Activated T-helper 1 cell treated with anti-CD3 and anti-CD28 coated beads, Interleukin-12 subunit alpha, Interleukin-12 subunit beta, Interleukin-2, Interleukin-4 antibody, amounts not matched to agents 30 ng/mL and 10 ng/mL and 1 ng/mL, durations not matched to agents 14 hours and 24 hours and 36 hours (primary cell): ENCODE measurements at regions of chr1 and their contacts with region 1.

Region 1: DNA sequence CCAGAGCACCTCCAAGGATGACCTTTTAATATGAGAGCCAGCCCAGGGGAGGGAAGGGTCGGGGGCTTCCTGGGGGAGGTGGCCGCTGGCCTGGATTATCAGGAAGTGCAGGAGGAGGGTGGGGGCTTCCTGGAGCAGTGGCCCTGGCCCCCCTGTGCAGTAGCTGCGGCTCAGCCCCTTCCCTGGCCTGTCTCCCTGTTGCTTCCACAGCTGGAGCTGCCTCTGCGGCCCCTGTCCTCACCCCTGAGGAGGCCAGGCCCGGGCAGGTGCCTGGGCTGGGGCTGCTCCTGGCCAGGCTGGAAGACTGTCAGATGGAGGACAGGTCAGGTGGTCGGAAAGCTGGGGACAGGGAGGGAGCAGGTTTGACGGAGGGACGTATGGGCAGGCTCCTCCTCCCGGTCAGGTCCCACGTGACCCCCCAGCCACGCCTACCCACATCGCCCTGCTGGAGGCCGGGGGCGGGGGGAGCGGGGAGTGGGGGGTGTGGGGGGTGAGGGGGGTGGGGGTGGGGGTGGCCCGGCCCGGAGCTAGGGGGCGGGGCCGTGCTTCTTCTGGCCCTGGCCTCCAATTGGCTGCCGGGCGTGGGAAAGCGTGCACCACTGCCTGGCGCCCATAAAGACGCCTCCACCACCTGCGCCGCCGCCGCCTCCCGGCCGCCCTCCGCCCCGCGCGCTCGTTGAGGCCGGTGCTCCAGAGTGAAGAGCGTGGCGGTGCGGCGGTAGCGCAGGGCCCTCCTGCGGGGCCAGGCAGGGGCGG is 10.2 kb upstream of the TNFRSF14 start:
- DNase-seq: peak; percentile 87
- H3K4me3 Mint-ChIP-seq: peak overlapping the region; percentile 91
- H3K27ac Mint-ChIP-seq: peak overlapping the region; percentile 61
- H3K4me1 Mint-ChIP-seq: peaks cover 7% of the 10 kb centered on the region
- H3K27me3 Mint-ChIP-seq: peaks cover 13% of the 10 kb centered on the region

Region 2: DNA sequence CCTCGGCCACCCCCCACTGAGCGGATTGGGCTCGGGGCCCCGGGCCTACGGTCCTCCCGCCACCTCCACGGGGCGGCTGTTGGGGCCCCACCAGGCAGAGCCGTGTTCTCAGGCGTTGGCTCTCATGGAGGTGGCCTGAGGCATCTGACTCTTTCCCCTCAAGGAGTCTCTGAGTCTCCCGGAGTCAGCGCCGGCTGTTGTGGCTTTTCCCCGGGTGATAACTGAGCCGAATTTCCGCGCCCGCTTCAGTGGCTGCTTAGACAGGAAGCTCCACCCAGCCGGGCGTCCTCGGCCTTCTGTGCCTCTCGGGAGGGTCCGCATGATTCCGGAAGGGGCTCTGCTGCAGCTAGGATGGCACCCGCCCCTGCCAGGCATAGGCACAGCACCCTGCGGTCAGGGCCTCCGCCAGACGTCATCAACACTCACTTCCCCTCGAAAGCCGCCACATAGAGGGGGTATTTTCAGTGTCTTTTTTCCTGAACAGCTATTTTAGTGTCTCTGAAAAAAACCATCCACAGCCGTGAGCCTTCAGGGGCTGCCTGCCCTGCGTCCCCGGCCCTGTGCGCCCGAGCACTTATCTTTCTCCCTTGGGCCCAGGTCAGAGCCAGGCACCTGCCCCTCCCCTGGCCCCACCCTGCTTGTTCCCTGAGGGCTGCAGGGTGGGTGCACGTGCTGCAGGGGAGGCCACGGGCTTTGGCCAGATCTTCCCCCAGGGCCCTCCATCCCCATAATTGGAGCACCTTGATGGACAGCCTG is 244.9 kb before region 1 on chr1:
- intact Hi-C with region 1: loop called (anchors 5 kb)
- DNase-seq: peak; percentile 77
- H3K4me3 Mint-ChIP-seq: peak overlapping the region; percentile 77
- H3K27ac Mint-ChIP-seq: peak overlapping the region; percentile 91
- H3K4me1 Mint-ChIP-seq: peaks cover 35% of the 10 kb centered on the region
- H3K27me3 Mint-ChIP-seq: no peaks in the 10 kb centered on the region

Region 3: DNA sequence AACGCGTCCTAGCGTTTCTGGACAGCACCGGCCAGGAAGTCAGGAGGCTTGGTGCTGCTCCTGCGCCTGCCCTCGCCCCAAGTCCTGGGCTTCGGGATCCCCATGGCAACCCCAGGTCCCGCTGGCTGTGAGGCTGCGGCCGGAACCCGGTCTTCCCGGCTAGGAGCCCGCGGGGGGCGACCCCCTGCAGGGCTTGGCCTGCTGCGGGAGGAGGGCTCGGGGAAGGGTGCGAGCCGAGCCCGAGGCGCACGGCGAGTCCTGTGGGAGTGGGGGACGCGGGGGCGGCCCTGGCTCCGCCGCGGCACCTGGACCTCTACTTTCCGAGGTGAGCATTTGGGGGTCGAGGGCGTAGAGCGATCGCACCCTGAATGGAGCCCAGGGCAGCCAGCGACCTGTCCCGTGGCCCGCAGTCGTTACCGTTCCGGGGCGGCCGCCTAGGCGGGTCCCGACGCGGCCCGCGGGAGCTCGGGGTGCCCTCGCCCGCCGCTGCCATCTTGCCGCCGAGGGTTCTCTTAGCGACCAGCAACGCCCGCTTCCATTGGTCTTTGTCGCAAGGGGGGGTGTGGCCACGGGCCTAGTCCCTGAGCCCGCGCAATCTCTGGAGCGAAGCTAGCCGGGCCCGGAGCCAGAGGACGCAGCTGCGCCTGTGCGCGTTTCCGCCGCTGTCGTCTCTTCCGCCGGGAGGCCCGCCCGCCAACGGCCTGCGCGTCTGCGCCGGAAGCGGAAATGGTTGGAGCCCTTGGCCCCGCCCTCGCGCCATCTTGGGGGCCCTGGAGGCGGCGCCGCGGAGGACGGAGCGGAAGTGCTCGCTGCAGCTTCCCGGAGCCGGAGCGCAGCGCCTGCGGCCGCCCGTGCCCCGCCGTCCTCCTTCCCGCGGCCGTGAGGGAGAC is 154.7 kb before region 1 on chr1 and contains the starts of genes MORN1 and RER1:
- intact Hi-C with region 1: loop called (anchors 1 kb)
- DNase-seq: peak; percentile 99
- H3K4me3 Mint-ChIP-seq: peak within 1 kb of the TSS; percentile 88
- H3K27ac Mint-ChIP-seq: peak within 1 kb of the TSS; percentile 82
- H3K4me1 Mint-ChIP-seq: peaks cover 28% of the 10 kb centered on the region
- H3K27me3 Mint-ChIP-seq: no peaks in the 10 kb centered on the region
- total RNA-seq, gene MORN1: 8.4 and 8.6 TPM in 2 replicates
- total RNA-seq, gene RER1: 161 and 177 TPM in 2 replicates

Region 4: DNA sequence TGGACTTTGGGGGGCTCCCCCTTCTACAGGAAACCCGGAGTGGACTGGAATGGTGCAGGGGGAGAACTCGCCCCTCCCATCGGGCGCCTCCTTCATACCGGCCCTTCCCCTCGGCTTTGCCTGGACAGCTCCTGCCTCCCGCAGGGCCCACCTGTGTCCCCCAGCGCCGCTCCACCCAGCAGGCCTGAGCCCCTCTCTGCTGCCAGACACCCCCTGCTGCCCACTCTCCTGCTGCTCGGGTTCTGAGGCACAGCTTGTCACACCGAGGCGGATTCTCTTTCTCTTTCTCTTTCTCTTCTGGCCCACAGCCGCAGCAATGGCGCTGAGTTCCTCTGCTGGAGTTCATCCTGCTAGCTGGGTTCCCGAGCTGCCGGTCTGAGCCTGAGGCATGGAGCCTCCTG is 10.3 kb after region 1 on chr1 and contains the start of gene TNFRSF14:
- intact Hi-C with region 1: loop called (anchors 1 kb)
- DNase-seq: peak; percentile 73
- H3K4me3 Mint-ChIP-seq: peak within 1 kb of the TSS; percentile 88
- H3K27ac Mint-ChIP-seq: peak within 1 kb of the TSS; percentile 86
- H3K4me1 Mint-ChIP-seq: peaks cover 21% of the 10 kb centered on the region
- H3K27me3 Mint-ChIP-seq: no peaks in the 10 kb centered on the region
- total RNA-seq, gene TNFRSF14: 207 and 215 TPM in 2 replicates

Region 5: DNA sequence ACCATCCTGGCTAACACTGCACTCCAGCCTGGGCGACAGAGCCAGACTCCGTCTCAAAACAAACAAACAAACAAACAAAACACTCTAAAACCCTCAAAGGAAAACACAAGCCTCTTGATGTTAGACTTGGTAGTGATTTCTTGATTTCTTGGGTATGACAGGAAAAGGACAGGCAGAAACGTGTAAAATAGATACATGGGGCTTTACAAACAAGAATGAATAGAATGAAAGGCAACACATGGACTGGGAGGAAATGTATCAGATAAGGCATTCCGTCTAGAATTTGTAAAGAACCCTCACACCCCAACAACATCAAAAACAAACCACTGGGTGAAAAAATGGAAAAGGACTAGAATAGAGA is 32.8 kb after region 1 on chr1:
- intact Hi-C with region 1: loop called (anchors 1 kb)
- DNase-seq: no peak
- H3K4me3 Mint-ChIP-seq: peak overlapping the region; percentile 42
- H3K27ac Mint-ChIP-seq: peak overlapping the region; percentile 95
- H3K4me1 Mint-ChIP-seq: peaks cover 83% of the 10 kb centered on the region
- H3K27me3 Mint-ChIP-seq: no peaks in the 10 kb centered on the region

Region 6: GRCh38 chr1:2642560-2643413 is 96.8 kb after region 1 on chr1:
- intact Hi-C with region 1: loop called (anchors 1 kb)
- DNase-seq: peak; percentile 93
- H3K4me3 Mint-ChIP-seq: peak overlapping the region; percentile 85
- H3K27ac Mint-ChIP-seq: peak overlapping the region; percentile 93
- H3K4me1 Mint-ChIP-seq: no peaks in the 10 kb centered on the region
- H3K27me3 Mint-ChIP-seq: no peaks in the 10 kb centered on the region

Region 7: DNA sequence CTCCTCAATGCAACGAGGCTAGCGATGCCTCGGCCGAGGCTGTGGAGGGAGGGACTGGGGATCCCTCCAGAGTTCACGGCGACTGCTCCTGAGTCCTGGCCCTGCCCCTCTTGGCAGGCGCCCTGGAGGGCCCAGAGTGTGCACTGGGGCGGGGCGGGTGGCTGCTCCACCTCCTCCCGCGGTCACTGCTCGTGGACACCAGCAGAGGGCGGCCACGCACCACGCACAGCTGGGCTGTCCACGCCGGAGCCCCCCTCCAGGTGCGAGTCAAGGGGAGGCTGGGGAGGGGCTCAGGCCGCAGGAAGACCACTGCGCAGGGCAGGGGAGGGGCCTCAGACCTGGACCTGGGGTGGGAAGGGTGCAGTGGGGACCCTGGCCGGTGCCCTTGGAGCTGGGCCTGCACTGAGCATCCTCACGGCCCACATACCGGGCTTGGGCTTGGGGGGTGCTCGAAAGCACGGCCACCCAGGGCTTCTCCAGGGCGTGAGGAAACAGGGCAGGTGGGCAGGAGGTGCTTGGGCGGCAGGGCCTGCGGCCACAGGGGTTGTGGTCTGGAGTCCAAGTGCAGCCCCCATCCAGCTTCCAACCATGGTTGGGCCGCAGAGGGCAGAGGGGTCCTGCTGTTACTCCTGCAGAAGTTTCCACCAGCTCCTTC is 276.2 kb after region 1 on chr1:
- intact Hi-C with region 1: no loop called
- DNase-seq: no peak
- H3K4me3 Mint-ChIP-seq: no peak overlapping the region
- H3K27ac Mint-ChIP-seq: no peak overlapping the region
- H3K4me1 Mint-ChIP-seq: no peaks in the 10 kb centered on the region
- H3K27me3 Mint-ChIP-seq: no peaks in the 10 kb centered on the region